Activated T-helper 1 cell treated with anti-CD3 and anti-CD28 coated beads, Interleukin-12 subunit alpha, Interleukin-12 subunit beta, Interleukin-2, Interleukin-4 antibody, amounts not matched to agents 30 ng/mL and 10 ng/mL and 1 ng/mL, durations not matched to agents 14 hours and 24 hours and 36 hours (primary cell): ENCODE measurements at regions of chr1 and their contacts with region 1.

Region 1: GRCh38 chr1:211352985-211353515 is 26.4 kb downstream of the TRAF5 start:
- DNase-seq: no peak
- H3K4me3 Mint-ChIP-seq: peak overlapping the region; percentile 66
- H3K27ac Mint-ChIP-seq: peak overlapping the region; percentile 80
- H3K4me1 Mint-ChIP-seq: peaks cover 65% of the 10 kb centered on the region
- H3K27me3 Mint-ChIP-seq: no peaks in the 10 kb centered on the region

Region 2: DNA sequence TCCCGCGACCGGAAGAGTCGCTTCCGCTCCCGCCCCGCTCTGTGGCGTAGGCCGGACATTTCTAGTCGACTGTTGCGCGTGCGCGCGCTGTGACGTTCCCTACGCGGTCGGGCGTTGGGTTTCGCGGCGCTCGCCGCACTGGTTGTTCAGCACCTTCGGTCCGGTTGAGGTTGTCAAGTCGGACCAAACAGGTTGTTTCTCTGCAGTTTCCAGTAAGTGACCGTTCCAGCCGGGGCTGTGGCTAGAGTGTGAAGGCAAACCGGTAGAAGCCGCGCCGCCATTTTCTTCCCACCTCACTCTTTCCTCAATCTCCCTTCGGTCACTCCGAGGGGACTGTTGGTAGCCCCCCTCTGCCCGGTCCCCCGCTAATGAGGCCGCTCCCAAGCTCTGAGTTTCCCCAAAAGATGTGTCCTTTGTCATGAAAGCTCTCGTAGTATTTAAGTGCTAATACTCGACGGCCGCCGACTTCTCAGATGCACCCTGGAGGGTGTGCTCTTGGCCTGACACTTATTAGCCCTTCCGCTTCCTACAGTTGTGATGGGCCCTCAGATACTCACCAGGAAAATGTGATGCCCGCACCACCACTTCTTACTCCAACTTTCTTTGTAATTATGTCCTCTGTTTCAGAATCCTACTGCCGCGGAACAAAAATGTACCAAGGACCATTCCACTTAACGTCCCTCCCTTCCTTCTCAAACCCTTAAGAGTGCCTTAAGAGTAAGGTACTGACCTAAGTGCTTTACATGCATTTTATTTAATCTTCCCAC is 29.8 kb after region 1 on chr1:
- intact Hi-C with region 1: loop called (anchors 2 kb)
- DNase-seq: peak; percentile 77
- H3K4me3 Mint-ChIP-seq: peak overlapping the region; percentile 91
- H3K27ac Mint-ChIP-seq: peak overlapping the region; percentile 89
- H3K4me1 Mint-ChIP-seq: peaks cover 51% of the 10 kb centered on the region
- H3K27me3 Mint-ChIP-seq: peaks cover 8% of the 10 kb centered on the region

Region 3: GRCh38 chr1:211393203-211393602 is 40.2 kb after region 1 on chr1:
- intact Hi-C with region 1: no loop called
- DNase-seq: no peak
- H3K4me3 Mint-ChIP-seq: no peak overlapping the region
- H3K27ac Mint-ChIP-seq: no peak overlapping the region
- H3K4me1 Mint-ChIP-seq: no peaks in the 10 kb centered on the region
- H3K27me3 Mint-ChIP-seq: no peaks in the 10 kb centered on the region